Activated CD8-positive, alpha-beta T cell treated with anti-CD3 and anti-CD28 coated beads, Interleukin-2, amount 10 ng/mL, durations not matched to agents 7 days and 5 days (primary cell): ENCODE measurements at regions of chr7 and their contacts with region 1.

Region 1: GRCh38 chr7:104983578-104984539 is 30.1 kb upstream of the KMT2E start:
- DNase-seq: peak; percentile 89
- ATAC-seq: peak; percentile 92
- H3K4me3 Mint-ChIP-seq: peak overlapping the region; percentile 100
- H3K27ac Mint-ChIP-seq: peak overlapping the region; percentile 100
- H3K4me1 Mint-ChIP-seq: peaks cover 69% of the 10 kb centered on the region
- H3K27me3 Mint-ChIP-seq: no peaks in the 10 kb centered on the region

Region 2: DNA sequence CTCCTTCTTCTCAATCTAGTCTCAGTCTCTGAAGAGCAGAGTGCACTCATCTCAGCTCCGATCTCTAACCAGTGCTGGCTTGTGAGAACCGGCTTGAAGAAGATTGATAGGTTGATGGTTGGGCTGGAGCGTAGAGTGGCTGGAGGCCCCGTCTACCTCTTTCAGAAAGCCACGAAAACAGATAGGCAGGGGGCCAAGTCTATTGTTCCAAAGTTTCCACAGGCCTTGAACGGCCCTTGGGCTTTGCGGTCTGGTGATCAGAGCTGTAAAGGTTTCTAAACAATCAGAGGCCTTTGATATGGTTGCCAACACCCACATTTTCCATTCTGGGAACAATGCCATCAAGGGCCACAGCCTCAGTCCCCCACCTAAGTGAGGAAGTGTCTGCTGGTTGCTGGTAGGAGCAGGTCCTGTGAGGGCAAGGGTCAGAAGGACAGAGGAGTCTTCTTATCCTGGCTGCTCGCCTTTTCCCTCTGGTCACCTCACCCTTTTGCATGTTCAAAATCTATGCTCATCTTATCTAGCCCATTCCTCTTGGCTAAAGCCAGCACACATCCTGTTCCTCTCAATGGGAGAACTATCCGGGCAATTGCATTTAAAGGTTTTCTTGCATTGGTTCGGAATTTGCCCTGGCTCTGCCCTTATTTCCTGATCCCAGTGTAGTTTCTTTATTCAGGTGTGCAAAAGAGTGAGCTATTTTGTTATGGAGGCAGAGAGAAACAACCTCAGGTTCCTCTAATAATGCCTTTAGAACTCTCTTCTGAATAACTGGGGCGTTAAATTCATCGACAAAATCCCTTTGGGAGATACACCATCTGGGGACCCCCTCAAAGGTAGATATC is 40.1 kb before region 1 on chr7:
- CTCF ChIA-PET with region 1: interaction called, 36 read pairs
- POLR2A ChIA-PET with region 1: interaction called, 96 read pairs
- DNase-seq: peak; percentile 76
- ATAC-seq: peak; percentile 51
- H3K4me3 Mint-ChIP-seq: peak overlapping the region; percentile 83
- H3K27ac Mint-ChIP-seq: peak overlapping the region; percentile 100
- H3K4me1 Mint-ChIP-seq: peaks cover 70% of the 10 kb centered on the region
- H3K27me3 Mint-ChIP-seq: no peaks in the 10 kb centered on the region

Region 3: DNA sequence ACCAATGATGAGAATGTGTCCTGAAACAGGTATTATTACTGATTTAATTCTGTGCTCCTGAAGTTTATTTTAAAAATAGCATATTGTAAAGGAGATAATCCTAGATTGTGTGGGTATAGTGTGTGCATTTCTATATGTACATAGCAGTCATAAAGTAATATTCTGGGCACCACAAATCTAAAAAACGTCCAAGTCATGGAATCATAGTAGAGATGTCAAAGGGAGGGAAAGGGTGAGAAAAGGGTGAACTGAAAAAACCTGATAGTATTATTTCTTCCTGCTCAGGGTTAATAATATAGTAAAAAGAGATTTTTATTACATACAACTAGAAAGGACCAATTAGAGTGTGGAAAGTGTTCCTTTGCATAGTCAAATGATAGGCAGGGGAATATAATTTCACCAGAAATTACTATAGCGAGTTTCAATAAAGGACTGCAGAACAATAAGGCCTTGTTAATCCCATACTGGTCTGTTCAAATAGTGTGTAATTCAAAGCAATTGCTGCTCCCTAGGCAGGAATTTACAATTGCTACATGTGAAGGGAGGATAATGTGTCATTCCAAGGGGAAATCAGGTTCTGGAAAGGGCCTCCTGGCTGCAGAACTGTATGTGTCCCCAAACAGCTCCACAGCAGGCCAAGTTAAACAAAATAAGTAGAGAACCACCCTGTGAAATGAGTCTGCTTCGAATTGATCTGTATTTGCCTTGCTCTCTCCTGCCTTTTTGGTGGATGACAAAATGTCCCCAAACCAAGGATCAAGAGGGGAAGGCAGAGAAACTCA is 12.4 kb before region 1 on chr7:
- CTCF ChIA-PET with region 1: interaction called, 86 read pairs
- POLR2A ChIA-PET with region 1: interaction called, 9 read pairs
- DNase-seq: no peak
- ATAC-seq: no peak
- H3K4me3 Mint-ChIP-seq: no peak overlapping the region
- H3K27ac Mint-ChIP-seq: no peak overlapping the region
- H3K4me1 Mint-ChIP-seq: no peaks in the 10 kb centered on the region
- H3K27me3 Mint-ChIP-seq: no peaks in the 10 kb centered on the region

Region 4: GRCh38 chr7:105013221-105013815 is 29.5 kb after region 1 on chr7:
- CTCF ChIA-PET with region 1: interaction called, 82 read pairs
- POLR2A ChIA-PET with region 1: interaction called, 373 read pairs
- DNase-seq: peak; percentile 94
- ATAC-seq: peak; percentile 63
- H3K4me3 Mint-ChIP-seq: peak overlapping the region; percentile 99
- H3K27ac Mint-ChIP-seq: peak overlapping the region; percentile 99
- H3K4me1 Mint-ChIP-seq: peaks cover 34% of the 10 kb centered on the region
- H3K27me3 Mint-ChIP-seq: peaks cover 2% of the 10 kb centered on the region

Region 5: DNA sequence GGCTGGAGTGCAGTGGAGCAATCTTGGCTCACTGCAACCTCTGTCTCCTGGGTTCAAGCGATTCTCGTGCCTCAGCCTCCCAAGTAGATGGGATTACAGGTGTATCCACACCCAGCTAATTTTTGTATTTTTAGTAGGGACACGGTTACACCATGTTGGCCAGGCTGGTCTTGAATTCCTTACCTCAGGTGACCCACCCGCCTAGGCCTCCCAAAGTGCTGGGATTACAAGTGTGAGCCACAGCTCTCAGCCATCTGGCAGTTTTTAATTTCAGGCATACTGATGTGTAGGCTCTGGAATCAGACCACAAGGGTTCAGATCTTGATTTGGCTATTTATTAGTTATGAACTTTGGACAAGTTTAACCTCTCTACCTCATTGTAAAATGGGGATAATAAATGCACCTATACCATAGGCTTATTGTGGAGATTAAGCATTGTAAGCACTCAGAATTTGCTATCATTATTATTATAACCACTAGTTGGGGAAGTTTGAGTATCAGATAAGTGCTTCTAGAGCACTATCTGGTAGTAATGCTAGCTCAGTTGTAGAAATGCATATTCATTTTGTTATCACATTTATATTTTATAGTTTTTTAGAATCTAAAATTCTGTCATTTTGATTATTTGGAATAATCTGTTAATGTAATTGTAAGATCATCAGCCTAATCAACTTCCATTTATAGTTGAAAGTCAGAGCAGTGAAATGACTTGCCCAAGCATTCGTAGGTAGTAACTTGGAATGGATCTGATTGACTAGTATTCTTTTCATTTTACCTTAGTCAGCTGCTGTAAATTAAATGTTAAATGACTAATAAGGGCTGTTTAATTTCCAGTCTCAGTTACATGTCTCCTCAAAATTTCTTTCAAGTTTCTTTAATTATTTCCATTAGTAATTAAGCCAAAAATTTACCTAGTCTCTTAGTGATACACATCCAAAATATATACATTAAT is 52.6 kb after region 1 on chr7:
- CTCF ChIA-PET with region 1: interaction called, 10 read pairs
- POLR2A ChIA-PET with region 1: interaction called, 3 read pairs
- DNase-seq: no peak
- ATAC-seq: no peak
- H3K4me3 Mint-ChIP-seq: no peak overlapping the region
- H3K27ac Mint-ChIP-seq: no peak overlapping the region
- H3K4me1 Mint-ChIP-seq: peaks cover 39% of the 10 kb centered on the region
- H3K27me3 Mint-ChIP-seq: no peaks in the 10 kb centered on the region

Region 6: DNA sequence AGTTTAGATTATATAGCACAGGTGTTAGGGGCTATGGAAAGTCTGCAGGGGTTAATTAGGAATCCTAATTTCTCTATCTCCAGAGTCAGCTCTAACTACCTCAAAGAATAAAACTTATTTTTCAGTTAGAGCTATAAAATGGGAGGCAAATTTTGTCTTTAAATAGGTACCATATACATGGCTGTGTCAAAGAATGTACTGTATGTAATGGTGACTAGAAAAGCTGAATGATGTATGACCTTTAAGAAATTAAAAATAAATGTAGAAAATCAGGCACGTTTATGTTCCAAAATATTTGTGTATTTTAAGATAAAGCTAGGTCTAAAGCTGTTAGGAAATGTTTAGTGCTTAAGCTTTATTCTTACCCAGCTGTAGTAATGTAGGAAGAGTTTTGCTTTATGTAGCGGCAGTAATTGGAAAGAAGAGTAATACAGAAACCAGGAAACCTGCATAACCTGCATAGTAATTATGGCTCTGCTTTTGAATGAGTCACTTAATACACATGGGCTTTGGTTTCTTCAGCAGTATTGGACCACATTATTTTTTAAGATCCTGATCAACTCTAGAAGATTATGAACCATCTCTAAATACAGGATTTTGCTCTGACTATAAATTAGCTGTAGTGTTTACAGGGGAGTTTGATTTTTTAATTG is 115.1 kb after region 1 on chr7:
- CTCF ChIA-PET with region 1: interaction called, 17 read pairs
- POLR2A ChIA-PET with region 1: no interaction called
- DNase-seq: no peak
- ATAC-seq: peak; percentile 65
- H3K4me3 Mint-ChIP-seq: no peak overlapping the region
- H3K27ac Mint-ChIP-seq: no peak overlapping the region
- H3K4me1 Mint-ChIP-seq: peaks cover 29% of the 10 kb centered on the region
- H3K27me3 Mint-ChIP-seq: no peaks in the 10 kb centered on the region

Region 7: GRCh38 chr7:105131890-105132289 is 148.0 kb after region 1 on chr7:
- CTCF ChIA-PET with region 1: no interaction called
- POLR2A ChIA-PET with region 1: no interaction called
- DNase-seq: no peak
- ATAC-seq: no peak
- H3K4me3 Mint-ChIP-seq: no peak overlapping the region
- H3K27ac Mint-ChIP-seq: no peak overlapping the region
- H3K4me1 Mint-ChIP-seq: peaks cover 16% of the 10 kb centered on the region
- H3K27me3 Mint-ChIP-seq: no peaks in the 10 kb centered on the region